ENCODE measurements at regions of chr18 and their contacts with region 1.

Region 1: GRCh38 chr18:13530879-13531387 is 195.4 kb downstream of the FAM210A start:
- DNase-seq: peak; percentile 7
- ATAC-seq: peak; percentile 96
- H3K4me3 ChIP-seq: no peak overlapping the region
- H3K27ac ChIP-seq: no peak overlapping the region
- H3K4me1 ChIP-seq: no peaks in the 10 kb centered on the region
- H3K27me3 ChIP-seq: peaks cover 20% of the 10 kb centered on the region
- CTCF ChIP-seq: peak; percentile 69

Region 2: GRCh38 chr18:13095466-13095865 is 435.5 kb before region 1 on chr18:
- CTCF ChIA-PET with region 1: no interaction called
- POLR2A ChIA-PET with region 1: no interaction called
- in situ Hi-C with region 1: no loop called
- intact Hi-C with region 1: no loop called
- DNase-seq: no peak
- ATAC-seq: no peak
- H3K4me3 ChIP-seq: no peak overlapping the region
- H3K27ac ChIP-seq: no peak overlapping the region
- H3K4me1 ChIP-seq: no peaks in the 10 kb centered on the region
- H3K27me3 ChIP-seq: no peaks in the 10 kb centered on the region
- CTCF ChIP-seq: no peak

Region 3: DNA sequence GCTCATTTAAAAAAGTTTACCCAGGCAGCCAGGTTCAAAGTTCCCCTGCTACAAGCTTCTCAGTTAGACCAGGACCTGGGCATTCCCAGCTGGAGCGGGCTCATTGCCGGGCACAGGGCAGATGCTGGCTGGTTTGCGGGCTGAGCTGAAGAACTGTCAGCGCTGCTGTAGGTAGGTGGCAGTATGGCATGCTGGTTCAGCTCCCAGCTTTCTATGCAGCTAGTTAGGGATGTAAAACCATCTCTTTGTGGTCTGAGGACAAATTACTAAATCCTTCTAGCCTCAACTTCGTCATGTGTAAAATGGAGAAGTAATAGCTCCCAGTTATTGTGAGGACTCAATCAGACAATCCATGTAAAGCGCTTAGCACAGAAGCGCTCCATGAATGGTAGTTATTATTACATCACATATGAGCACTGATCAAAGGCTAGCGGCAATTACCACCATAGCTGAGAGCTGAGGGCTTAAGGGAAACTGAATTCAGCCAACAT is 314.8 kb before region 1 on chr18:
- CTCF ChIA-PET with region 1: interaction called, 4 read pairs
- POLR2A ChIA-PET with region 1: no interaction called
- in situ Hi-C with region 1: no loop called
- intact Hi-C with region 1: loop called (anchors 5 kb)
- DNase-seq: peak; percentile 33
- ATAC-seq: peak; percentile 86
- H3K4me3 ChIP-seq: no peak overlapping the region
- H3K27ac ChIP-seq: no peak overlapping the region
- H3K4me1 ChIP-seq: no peaks in the 10 kb centered on the region; the same call in 1 of the 2 replicates
- H3K27me3 ChIP-seq: peaks cover 30% of the 10 kb centered on the region
- CTCF ChIP-seq: peak; percentile 81

Region 4: GRCh38 chr18:13272416-13272815 is 258.5 kb before region 1 on chr18:
- CTCF ChIA-PET with region 1: no interaction called
- POLR2A ChIA-PET with region 1: interaction called, 10 read pairs
- in situ Hi-C with region 1: no loop called
- intact Hi-C with region 1: no loop called
- DNase-seq: no peak
- ATAC-seq: no peak
- H3K4me3 ChIP-seq: no peak overlapping the region
- H3K27ac ChIP-seq: no peak overlapping the region
- H3K4me1 ChIP-seq: no peaks in the 10 kb centered on the region
- H3K27me3 ChIP-seq: no peaks in the 10 kb centered on the region
- CTCF ChIP-seq: no peak

Region 5: GRCh38 chr18:13603304-13604019 is 72.5 kb after region 1 on chr18:
- CTCF ChIA-PET with region 1: no interaction called
- POLR2A ChIA-PET with region 1: no interaction called
- in situ Hi-C with region 1: no loop called
- intact Hi-C with region 1: no loop called
- DNase-seq: no peak
- ATAC-seq: no peak
- H3K4me3 ChIP-seq: no peak overlapping the region
- H3K27ac ChIP-seq: no peak overlapping the region
- H3K4me1 ChIP-seq: no peaks in the 10 kb centered on the region
- H3K27me3 ChIP-seq: no peaks in the 10 kb centered on the region
- CTCF ChIP-seq: no peak